Heart left ventricle (tissue), 16 donors: ENCODE measurements at regions of chr5 and their contacts with region 1.

Region 1: DNA sequence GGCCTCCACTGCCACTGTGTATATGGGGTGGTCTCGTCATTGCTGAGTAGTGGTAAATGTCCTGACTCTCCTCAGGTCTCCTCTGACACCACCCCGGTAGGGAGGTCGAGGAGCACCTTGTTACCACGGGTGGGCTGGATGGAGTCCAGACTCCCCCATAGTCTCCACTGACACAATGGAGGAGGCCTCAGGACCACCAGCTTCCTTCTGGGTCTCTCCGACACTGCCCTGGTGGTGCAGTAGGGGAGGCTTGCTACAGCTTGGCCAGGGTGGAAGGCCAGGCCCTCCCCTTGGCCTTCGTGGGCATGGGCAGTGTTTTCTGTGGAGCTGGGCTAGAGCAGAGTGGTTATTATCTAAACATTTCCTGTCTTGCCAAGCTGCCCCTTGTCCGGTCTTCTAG is 15.4 kb upstream of the SH3PXD2B start:
- DNase-seq: no peak
- ATAC-seq: no peak
- H3K4me3 ChIP-seq: no peak overlapping the region
- H3K27ac ChIP-seq: no peak overlapping the region
- H3K4me1 ChIP-seq: no peaks in the 10 kb centered on the region
- H3K27me3 ChIP-seq: peaks cover 0 to 3% (median 0%) of the 10 kb centered on the region in 9 donors
- CTCF ChIP-seq: no peak
- POLR2A ChIP-seq: no peak

Region 2: GRCh38 chr5:172944741-172945140 is 475.0 kb after region 1 on chr5:
- intact Hi-C with region 1: loop called in 8 of 10 experiments (anchors 5 to 10 kb)
- DNase-seq: peak in 1 of 5 donors; percentile 19
- ATAC-seq: no peak
- H3K4me3 ChIP-seq: no peak overlapping the region
- H3K27ac ChIP-seq: peak overlapping the region in 1 of 12 donors; percentile 83
- H3K4me1 ChIP-seq: peaks cover 0 to 15% (median 0%) of the 10 kb centered on the region in 12 donors
- H3K27me3 ChIP-seq: no peaks in the 10 kb centered on the region
- CTCF ChIP-seq: no peak
- POLR2A ChIP-seq: no peak